Right ventricle myocardium superior (tissue), 1 donor: ENCODE measurements at regions of chr7 and their contacts with region 1.

Region 1: GRCh38 chr7:47435889-47436312 is 146.0 kb downstream of the TNS3 start:
- DNase-seq: peak; percentile 81
- ATAC-seq: peak; percentile 87

Region 2: GRCh38 chr7:47266131-47266706 is 169.7 kb before region 1 on chr7:
- intact Hi-C with region 1: loop called (anchors 5 kb)
- DNase-seq: peak; percentile 63
- ATAC-seq: peak; percentile 90

Region 3: GRCh38 chr7:47581806-47582763 is 146.2 kb after region 1 on chr7 and contains the start of gene TNS3:
- intact Hi-C with region 1: loop called (anchors 5 kb)
- DNase-seq: peak; percentile 66
- ATAC-seq: peak; percentile 84
- total RNA-seq, gene TNS3: 43.2 TPM

Region 4: GRCh38 chr7:47818796-47819606 is 383.1 kb after region 1 on chr7:
- intact Hi-C with region 1: loop called (anchors 5 kb)
- DNase-seq: peak; percentile 77
- ATAC-seq: peak; percentile 84